Endothelial cell of umbilical vein (primary cell): ENCODE measurements at regions of chr19 and their contacts with region 1.

Region 1: DNA sequence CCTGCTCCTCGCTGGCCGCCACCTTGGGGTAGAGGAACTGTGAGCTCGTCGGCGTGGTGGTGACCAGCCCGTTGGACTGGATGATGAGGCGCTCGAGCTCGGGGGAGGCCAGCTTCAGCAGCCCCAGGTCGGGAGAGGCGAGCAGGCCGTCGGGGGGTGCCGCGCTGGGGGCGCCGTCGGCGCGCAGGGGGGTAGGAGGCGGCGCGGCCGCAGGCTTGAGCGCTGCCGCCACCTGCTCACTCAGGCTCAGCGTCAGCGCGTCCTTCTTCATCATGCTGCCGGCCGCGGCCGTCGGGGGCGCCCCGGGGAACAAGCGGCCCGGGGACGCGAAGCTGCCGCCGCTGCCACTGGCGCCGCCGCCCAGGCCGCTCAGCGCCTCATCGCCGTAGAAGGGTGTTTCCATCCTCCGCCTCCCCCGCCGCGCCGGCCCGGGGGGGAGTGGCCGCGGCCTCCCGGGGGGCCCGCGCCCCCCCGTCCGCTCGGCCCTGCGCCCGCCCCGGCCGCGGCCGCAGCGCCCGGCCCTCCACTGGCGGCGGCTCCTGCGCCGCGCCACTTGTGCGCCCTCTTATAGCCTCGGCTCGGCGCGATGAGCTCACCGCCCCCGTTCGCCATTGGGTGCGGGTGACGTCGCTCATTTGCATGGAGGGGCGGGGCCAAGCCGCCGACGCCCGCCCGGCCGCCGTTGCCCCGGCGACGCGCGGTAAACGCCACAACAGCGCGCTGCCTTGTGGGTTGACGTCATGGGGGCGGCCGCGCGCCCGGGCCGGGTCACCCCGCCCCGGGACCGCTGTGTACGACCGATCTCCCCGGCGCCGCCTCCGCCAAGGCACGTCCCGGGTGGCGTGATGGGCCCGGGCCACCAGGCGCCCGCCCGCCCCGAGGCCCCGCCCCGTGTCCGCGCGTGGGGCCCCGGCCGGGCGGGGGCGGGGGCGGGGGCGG is at the start of gene JUND:
- DNase-seq: peak; percentile 98
- H3K4me3 ChIP-seq: peak within 1 kb of the TSS; percentile 72 to 92 (median 80)
- H3K27ac ChIP-seq: peak within 1 kb of the TSS; percentile 94
- H3K4me1 ChIP-seq: peaks cover 19% of the 10 kb centered on the region
- H3K27me3 ChIP-seq: no peaks in the 10 kb centered on the region
- CTCF ChIP-seq: no peak
- POLR2A ChIP-seq: peak; percentile 98
- total RNA-seq, gene JUND: 130 and 137 TPM in 2 replicates

Region 2: GRCh38 chr19:18269070-18269723 is 12.2 kb before region 1 on chr19:
- CTCF ChIA-PET with region 1: interaction called, 20 read pairs
- POLR2A ChIA-PET with region 1: interaction called, 4 read pairs
- dilution Hi-C with region 1: no loop called
- intact Hi-C with region 1: no loop called
- DNase-seq: no peak
- H3K4me3 ChIP-seq: no peak overlapping the region
- H3K27ac ChIP-seq: no peak overlapping the region
- H3K4me1 ChIP-seq: no peaks in the 10 kb centered on the region
- H3K27me3 ChIP-seq: no peaks in the 10 kb centered on the region
- CTCF ChIP-seq: no peak
- POLR2A ChIP-seq: no peak

Region 3: DNA sequence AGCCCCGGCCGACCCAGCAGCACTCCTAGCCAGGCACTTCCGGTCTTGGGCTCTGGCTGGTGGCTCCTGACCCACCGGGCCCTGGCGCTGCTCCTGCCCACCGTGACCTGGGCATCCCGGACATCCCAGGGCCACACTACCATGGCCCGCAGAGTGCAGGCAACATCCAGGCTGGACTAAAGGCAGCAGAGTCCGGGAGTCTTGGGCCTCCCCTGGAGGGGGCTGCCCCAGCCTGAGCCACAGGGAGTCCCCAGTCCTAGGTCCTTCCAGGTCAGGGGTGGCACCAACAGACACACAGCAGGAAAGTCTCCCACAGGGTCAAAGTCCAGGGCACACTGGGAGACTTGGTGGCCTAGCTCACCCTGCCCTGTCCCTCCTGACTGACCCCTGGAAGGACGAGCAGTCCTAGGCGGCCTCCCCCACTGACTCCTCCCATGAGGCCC is 30.8 kb after region 1 on chr19:
- CTCF ChIA-PET with region 1: interaction called, 87 read pairs
- POLR2A ChIA-PET with region 1: interaction called, 52 read pairs
- dilution Hi-C with region 1: no loop called
- intact Hi-C with region 1: no loop called
- DNase-seq: no peak
- H3K4me3 ChIP-seq: no peak overlapping the region
- H3K27ac ChIP-seq: no peak overlapping the region
- H3K4me1 ChIP-seq: no peaks in the 10 kb centered on the region
- H3K27me3 ChIP-seq: no peaks in the 10 kb centered on the region
- CTCF ChIP-seq: no peak
- POLR2A ChIP-seq: no peak

Region 4: DNA sequence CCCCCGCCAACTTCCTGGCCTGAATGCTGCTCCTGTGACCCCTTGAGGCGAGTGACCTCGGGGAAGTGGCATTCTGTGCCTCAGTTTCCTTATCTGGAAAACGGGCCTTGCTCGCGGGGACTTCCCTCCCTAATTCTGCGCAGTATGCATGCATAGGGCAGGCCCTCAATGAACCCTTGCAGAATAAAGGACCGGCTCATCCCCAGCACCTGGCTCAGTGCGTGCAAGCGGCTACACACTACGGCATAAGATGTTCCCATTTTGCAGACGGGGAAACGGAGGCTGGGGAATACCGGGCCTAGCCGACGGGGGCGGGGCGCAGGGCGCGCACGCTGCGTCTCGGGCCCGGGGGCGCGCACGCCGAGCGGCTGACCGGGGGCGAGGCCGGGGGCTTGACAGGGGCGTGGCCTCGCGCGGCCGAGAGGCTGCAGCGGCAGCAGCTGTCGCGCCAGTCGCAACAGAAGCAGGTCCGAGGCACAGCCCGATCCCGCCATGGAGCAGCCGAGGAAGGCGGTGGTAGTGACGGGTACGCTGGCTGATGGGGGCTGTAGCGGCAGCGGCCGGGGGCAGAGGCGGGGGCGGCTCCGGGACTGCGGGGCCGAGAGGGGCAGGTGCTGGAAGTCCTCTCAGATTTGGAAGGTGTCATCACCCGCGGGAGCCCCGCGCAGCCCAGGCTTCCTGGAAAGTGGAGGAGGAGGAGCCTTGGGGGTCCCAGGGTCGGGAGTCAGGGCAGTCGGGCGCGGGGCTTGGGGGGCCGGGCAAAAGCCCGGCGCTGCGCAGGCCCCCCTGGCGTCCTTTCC is 59.0 kb after region 1 on chr19 and contains the start of gene PGPEP1:
- CTCF ChIA-PET with region 1: interaction called, 51 read pairs
- POLR2A ChIA-PET with region 1: interaction called, 6 read pairs
- dilution Hi-C with region 1: no loop called
- intact Hi-C with region 1: loop called (anchors 5 kb)
- DNase-seq: peak; percentile 65
- H3K4me3 ChIP-seq: peak within 1 kb of the TSS; percentile 17 to 91 (median 52)
- H3K27ac ChIP-seq: no peak within 1 kb of the TSS
- H3K4me1 ChIP-seq: peaks cover 11% of the 10 kb centered on the region
- H3K27me3 ChIP-seq: peaks cover 0 to 2% of the 10 kb centered on the region in 2 experiments
- CTCF ChIP-seq: no peak
- POLR2A ChIP-seq: peak; percentile 64
- total RNA-seq, gene PGPEP1: 27.2 and 30.5 TPM in 2 replicates

Region 5: GRCh38 chr19:18388100-18388959 is 107.0 kb after region 1 on chr19:
- CTCF ChIA-PET with region 1: interaction called, 13 read pairs
- POLR2A ChIA-PET with region 1: interaction called, 30 read pairs
- dilution Hi-C with region 1: no loop called
- intact Hi-C with region 1: no loop called
- DNase-seq: peak; percentile 73
- H3K4me3 ChIP-seq: peak overlapping the region; percentile 71 to 97 (median 94)
- H3K27ac ChIP-seq: no peak overlapping the region
- H3K4me1 ChIP-seq: peaks cover 21% of the 10 kb centered on the region
- H3K27me3 ChIP-seq: no peaks in the 10 kb centered on the region
- CTCF ChIP-seq: peak; percentile 97 to 99
- POLR2A ChIP-seq: peak; percentile 32